BJ (cell line): ENCODE measurements at regions of chr10 and their contacts with region 1.

Region 1: GRCh38 chr10:72364239-72364777 is 9.6 kb upstream of the DNAJB12 start:
- DNase-seq: peak; percentile 41
- H3K4me3 ChIP-seq: no peak overlapping the region
- H3K27me3 ChIP-seq: no peaks in the 10 kb centered on the region
- CTCF ChIP-seq: peak; percentile 97

Region 2: GRCh38 chr10:72235544-72236279 is 128.6 kb before region 1 on chr10:
- CTCF ChIA-PET with region 1: no interaction called
- POLR2A ChIA-PET with region 1: no interaction called
- DNase-seq: no peak
- H3K4me3 ChIP-seq: no peak overlapping the region
- H3K27me3 ChIP-seq: no peaks in the 10 kb centered on the region
- CTCF ChIP-seq: no peak

Region 3: GRCh38 chr10:72375585-72375984 is 11.3 kb after region 1 on chr10:
- CTCF ChIA-PET with region 1: interaction called, 19 read pairs
- POLR2A ChIA-PET with region 1: no interaction called
- DNase-seq: no peak
- H3K4me3 ChIP-seq: no peak overlapping the region
- H3K27me3 ChIP-seq: no peaks in the 10 kb centered on the region
- CTCF ChIP-seq: peak; percentile 21; the same call in 1 of the 2 replicates

Region 4: DNA sequence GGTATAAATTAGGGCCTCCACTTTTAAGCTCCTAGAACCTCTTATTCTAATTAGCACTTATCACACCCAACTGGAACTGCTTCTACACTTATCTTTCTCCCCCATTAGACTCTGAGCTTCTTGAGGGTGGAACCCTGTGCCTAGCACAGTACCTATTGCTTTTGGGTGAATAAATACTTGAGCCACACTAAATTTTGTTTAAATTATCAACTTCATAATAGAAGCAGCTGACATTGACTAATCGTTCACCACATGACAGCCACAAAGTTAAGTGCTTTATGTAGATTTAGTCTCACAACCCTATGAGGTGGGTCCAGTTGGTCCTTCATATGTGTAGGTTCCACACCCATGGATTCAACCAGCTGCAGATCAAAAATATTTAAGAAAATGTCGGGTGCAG is 26.5 kb after region 1 on chr10:
- CTCF ChIA-PET with region 1: no interaction called
- POLR2A ChIA-PET with region 1: no interaction called
- DNase-seq: no peak
- H3K4me3 ChIP-seq: no peak overlapping the region
- H3K27me3 ChIP-seq: no peaks in the 10 kb centered on the region
- CTCF ChIP-seq: no peak

Region 5: GRCh38 chr10:72435570-72435969 is 71.3 kb after region 1 on chr10:
- CTCF ChIA-PET with region 1: no interaction called
- POLR2A ChIA-PET with region 1: no interaction called
- DNase-seq: no peak
- H3K4me3 ChIP-seq: no peak overlapping the region
- H3K27me3 ChIP-seq: no peaks in the 10 kb centered on the region
- CTCF ChIP-seq: no peak

Region 6: DNA sequence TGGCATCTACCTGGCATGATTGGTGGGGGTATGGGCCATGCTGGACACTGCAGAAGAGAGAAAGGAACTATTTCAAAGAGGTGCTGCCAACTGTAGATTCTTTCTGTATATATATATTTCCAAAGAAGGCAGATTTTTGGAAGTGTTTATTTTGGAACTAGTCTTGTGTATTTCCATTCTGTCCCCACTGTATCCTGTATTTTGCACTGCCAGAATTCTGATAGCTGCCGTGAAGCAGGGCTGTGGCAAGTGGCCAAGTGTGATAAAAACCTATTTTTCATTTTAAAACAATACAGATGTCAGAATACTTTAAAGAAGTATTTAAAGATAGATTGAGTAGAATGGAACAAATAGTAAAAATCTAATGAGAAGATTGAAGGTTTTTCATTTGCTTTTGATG is 344.7 kb after region 1 on chr10:
- CTCF ChIA-PET with region 1: interaction called, 3 read pairs
- POLR2A ChIA-PET with region 1: interaction called, 19 read pairs
- DNase-seq: no peak
- H3K4me3 ChIP-seq: no peak overlapping the region
- H3K27me3 ChIP-seq: no peaks in the 10 kb centered on the region
- CTCF ChIP-seq: no peak

Region 7: GRCh38 chr10:72834183-72834825 is 470.0 kb after region 1 on chr10:
- CTCF ChIA-PET with region 1: interaction called, 47 read pairs
- POLR2A ChIA-PET with region 1: no interaction called
- DNase-seq: peak; percentile 4
- H3K4me3 ChIP-seq: no peak overlapping the region
- H3K27me3 ChIP-seq: no peaks in the 10 kb centered on the region
- CTCF ChIP-seq: peak; percentile 58

Region 8: DNA sequence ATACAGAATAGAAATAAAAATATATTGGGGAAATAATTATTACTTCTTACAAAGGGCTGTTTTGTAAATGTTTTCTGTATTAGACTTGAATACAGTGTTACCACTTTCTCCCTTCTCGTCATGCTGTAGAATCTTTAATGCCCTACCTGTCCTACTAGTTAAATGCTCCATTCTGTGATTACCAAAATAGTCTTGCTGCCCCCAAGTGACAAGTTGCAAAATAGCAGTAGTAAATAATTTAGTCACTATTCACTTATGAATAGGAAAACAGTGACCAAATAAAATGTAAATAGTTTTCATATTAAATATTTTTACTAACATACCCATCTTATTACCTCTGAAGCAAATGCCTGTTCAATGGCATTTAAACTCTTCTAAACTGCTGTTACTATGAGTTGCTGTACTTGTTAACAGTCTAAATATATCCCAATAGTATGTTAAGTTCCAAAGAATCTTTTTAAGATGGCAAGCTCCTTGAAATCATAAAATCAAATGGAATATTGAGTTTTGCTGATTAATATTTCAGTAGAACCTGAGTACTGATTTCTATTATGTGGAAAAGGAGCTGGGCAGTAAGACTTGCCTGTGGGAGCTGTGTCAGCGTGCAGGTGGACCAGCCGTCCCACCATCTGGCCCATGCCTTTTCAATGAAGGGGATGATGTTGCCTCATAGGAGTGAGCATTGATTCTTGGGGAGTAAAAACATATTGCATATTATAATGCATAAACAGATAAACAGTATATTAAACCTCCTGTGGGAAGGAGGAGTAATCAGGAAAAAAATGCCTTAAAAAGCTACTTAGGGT is 511.1 kb after region 1 on chr10:
- CTCF ChIA-PET with region 1: interaction called, 10 read pairs
- POLR2A ChIA-PET with region 1: no interaction called
- DNase-seq: no peak
- H3K4me3 ChIP-seq: no peak overlapping the region
- H3K27me3 ChIP-seq: no peaks in the 10 kb centered on the region
- CTCF ChIP-seq: peak; percentile 54